Activated T-helper 2 cell treated with anti-CD3 and anti-CD28 coated beads, Interferon-gamma antibody, Interleukin-2, Interleukin-4, amounts not matched to agents 10 μg/mL and 5 μg/mL and 100 μg/mL, durations not matched to agents 14 hours and 24 hours and 36 hours (primary cell): ENCODE measurements at regions of chr12 and their contacts with region 1.

Region 1: GRCh38 chr12:109880016-109880931 is at the start of gene GLTP:
- DNase-seq: peak; percentile 90
- H3K4me3 Mint-ChIP-seq: peak within 1 kb of the TSS; percentile 94
- H3K27ac Mint-ChIP-seq: peak within 1 kb of the TSS; percentile 85
- H3K4me1 Mint-ChIP-seq: peaks cover 39% of the 10 kb centered on the region
- H3K27me3 Mint-ChIP-seq: peaks cover 7% of the 10 kb centered on the region
- total RNA-seq, gene GLTP: 26.6 and 27.2 TPM in 2 replicates

Region 2: DNA sequence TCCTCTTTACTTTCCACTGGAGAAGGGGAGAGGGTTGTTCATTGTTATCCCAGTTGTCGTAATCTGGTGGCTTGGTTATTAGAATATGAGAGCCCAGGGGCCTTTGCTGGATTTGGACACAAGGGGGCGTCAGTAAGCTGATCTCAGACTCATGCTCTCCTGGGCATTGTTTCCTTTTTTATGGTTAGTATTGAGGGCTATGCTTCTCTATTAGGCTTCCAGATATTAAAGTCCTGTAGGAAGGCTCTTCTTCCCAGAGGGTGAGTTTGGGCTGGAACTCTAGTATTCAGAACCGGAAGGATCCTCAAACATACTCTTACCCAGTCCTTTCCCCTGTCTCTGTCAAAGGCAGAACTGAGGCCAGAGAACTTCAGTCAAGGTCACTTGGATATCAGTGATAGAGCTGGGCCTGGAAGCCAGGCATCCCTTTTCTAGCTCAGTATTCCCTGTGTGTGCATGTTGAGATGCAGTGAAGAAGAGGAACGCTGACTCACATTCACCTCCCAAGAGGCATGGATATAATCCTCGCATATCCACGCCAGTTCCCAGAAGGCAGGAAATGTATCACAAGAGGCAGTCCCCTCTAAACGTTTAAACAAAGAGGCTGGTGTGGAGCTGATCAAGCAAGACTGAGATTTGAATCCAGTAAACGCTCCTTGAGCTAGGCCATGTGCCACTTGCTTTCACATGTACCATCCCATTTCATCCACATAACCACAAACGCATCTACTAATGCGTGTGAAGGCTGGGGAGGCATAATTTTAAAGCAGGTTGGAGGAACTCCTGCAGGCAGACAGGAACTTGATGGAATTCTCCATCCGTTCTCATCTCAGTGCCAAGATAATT is 361.2 kb before region 1 on chr12:
- intact Hi-C with region 1: loop called (anchors 2 kb)
- DNase-seq: peak; percentile 22
- H3K4me3 Mint-ChIP-seq: no peak overlapping the region
- H3K27ac Mint-ChIP-seq: no peak overlapping the region
- H3K4me1 Mint-ChIP-seq: no peaks in the 10 kb centered on the region
- H3K27me3 Mint-ChIP-seq: no peaks in the 10 kb centered on the region

Region 3: GRCh38 chr12:109804820-109805761 is 75.2 kb before region 1 on chr12:
- intact Hi-C with region 1: loop called (anchors 1 kb)
- DNase-seq: peak; percentile 48
- H3K4me3 Mint-ChIP-seq: no peak overlapping the region
- H3K27ac Mint-ChIP-seq: no peak overlapping the region
- H3K4me1 Mint-ChIP-seq: no peaks in the 10 kb centered on the region
- H3K27me3 Mint-ChIP-seq: no peaks in the 10 kb centered on the region

Region 4: GRCh38 chr12:109833307-109834189 is 46.7 kb before region 1 on chr12 and contains the start of gene TRPV4:
- intact Hi-C with region 1: no loop called
- DNase-seq: no peak
- H3K4me3 Mint-ChIP-seq: no peak within 1 kb of the TSS
- H3K27ac Mint-ChIP-seq: no peak within 1 kb of the TSS
- H3K4me1 Mint-ChIP-seq: peaks cover 2% of the 10 kb centered on the region
- H3K27me3 Mint-ChIP-seq: peaks cover 39% of the 10 kb centered on the region
- total RNA-seq, gene TRPV4: not detected in 2 replicates

Region 5: GRCh38 chr12:109844983-109845823 is 35.1 kb before region 1 on chr12:
- intact Hi-C with region 1: no loop called
- DNase-seq: peak; percentile 82
- H3K4me3 Mint-ChIP-seq: peak overlapping the region; percentile 40
- H3K27ac Mint-ChIP-seq: no peak overlapping the region
- H3K4me1 Mint-ChIP-seq: peaks cover 3% of the 10 kb centered on the region
- H3K27me3 Mint-ChIP-seq: peaks cover under 1% of the 10 kb centered on the region

Region 6: GRCh38 chr12:109899783-109900751 is 19.8 kb after region 1 on chr12 and contains the start of gene TCHP:
- intact Hi-C with region 1: loop called (anchors 1 kb)
- DNase-seq: peak; percentile 69
- H3K4me3 Mint-ChIP-seq: peak within 1 kb of the TSS; percentile 96
- H3K27ac Mint-ChIP-seq: peak within 1 kb of the TSS; percentile 98
- H3K4me1 Mint-ChIP-seq: peaks cover 15% of the 10 kb centered on the region
- H3K27me3 Mint-ChIP-seq: no peaks in the 10 kb centered on the region
- total RNA-seq, gene TCHP: 26.0 and 32.6 TPM in 2 replicates

Region 7: GRCh38 chr12:109994401-109995175 is 114.3 kb after region 1 on chr12:
- intact Hi-C with region 1: no loop called
- DNase-seq: no peak
- H3K4me3 Mint-ChIP-seq: peak overlapping the region; percentile 98
- H3K27ac Mint-ChIP-seq: peak overlapping the region; percentile 86
- H3K4me1 Mint-ChIP-seq: peaks cover 47% of the 10 kb centered on the region
- H3K27me3 Mint-ChIP-seq: no peaks in the 10 kb centered on the region